Caco-2 (cell line): ENCODE measurements at regions of chr3 and their contacts with region 1.

Region 1: DNA sequence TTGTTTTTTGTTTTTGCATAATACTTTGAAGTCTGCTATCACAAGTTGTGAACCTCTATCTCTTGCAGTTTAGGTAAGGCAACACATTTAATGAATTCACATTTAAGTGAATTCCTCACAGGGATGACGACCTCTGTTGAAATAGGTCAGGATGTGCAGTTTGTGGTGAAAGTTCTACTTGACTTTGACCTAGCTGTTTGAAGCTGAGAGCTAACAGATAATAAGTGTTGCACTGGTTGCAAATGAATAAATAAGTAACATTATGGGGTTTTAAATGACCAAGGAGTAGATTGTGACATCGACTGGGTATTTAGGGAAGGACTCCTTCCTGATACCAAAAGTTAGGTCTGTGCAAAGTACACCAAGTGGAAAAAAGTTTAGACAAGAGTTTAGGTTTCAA is 23.9 kb downstream of the NIT2 start:
- DNase-seq: no peak
- H3K4me3 ChIP-seq: no peak overlapping the region
- H3K4me3 Mint-ChIP-seq: no peak overlapping the region
- H3K27ac Mint-ChIP-seq: no peak overlapping the region
- H3K4me1 ChIP-seq: no peaks in the 10 kb centered on the region; the same call in 1 of the 2 replicates
- H3K4me1 Mint-ChIP-seq: no peaks in the 10 kb centered on the region
- H3K27me3 ChIP-seq: no peaks in the 10 kb centered on the region
- H3K27me3 Mint-ChIP-seq: no peaks in the 10 kb centered on the region
- CTCF ChIP-seq: no peak

Region 2: DNA sequence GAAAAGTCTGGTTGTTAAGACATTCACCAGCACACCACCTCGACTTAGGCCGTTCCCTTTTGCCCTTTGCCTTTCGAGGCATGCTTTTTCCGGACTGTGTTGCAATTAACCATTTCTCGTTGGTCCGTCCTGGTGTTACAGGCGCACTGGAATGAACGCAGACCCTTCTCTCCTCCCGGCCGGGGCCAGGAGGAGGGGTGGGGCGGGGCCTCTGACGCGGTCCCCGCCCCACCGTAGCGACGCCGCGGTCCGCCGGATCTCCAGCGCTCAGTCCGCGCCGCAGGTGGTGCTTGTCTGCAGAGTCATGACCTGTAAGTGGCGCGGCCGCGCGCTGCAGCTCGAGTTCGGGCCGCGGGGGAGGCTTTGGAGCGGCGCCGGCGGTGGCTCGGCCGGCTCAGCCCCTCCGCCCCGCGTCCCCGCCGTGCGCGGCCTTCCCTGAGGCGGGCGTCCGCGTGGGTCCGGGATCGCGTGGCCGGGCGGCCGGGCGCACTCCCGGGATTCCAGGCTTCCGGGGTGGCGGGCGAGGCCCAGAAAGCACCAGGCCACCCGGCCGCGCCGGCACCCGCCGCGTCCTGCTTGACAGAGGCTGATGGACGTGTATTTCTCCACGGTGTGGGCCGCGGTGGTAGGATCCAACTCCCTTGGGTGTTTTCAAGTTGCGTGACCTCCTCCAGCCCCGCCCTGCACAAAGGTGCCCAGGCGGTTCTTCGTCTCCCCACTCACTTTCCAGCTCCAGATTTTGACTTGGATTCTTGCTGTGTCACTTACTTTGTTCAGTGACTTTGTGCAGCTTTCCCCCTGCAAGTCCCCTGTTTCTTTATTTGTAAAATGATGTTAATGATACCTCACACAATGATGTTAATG is 23.7 kb before region 1 on chr3 and contains the start of gene NIT2:
- CTCF ChIA-PET with region 1: no interaction called
- POLR2A ChIA-PET with region 1: no interaction called
- intact Hi-C with region 1: loop called (anchors 2 kb)
- DNase-seq: peak; percentile 89 to 90
- H3K4me3 ChIP-seq: peak within 1 kb of the TSS; percentile 90
- H3K4me3 Mint-ChIP-seq: peak within 1 kb of the TSS; percentile 85
- H3K27ac Mint-ChIP-seq: peak within 1 kb of the TSS; percentile 89
- H3K4me1 ChIP-seq: peaks cover 19% of the 10 kb centered on the region
- H3K4me1 Mint-ChIP-seq: peaks cover 22% of the 10 kb centered on the region
- H3K27me3 ChIP-seq: no peaks in the 10 kb centered on the region
- H3K27me3 Mint-ChIP-seq: no peaks in the 10 kb centered on the region
- CTCF ChIP-seq: peak in 1 of 2 experiments; percentile 9
- total RNA-seq, gene NIT2: 59.7 and 64.1 TPM in 2 replicates